Posterior vena cava (tissue), 2 donors: ENCODE measurements at regions of chr6 and their contacts with region 1.

Region 1: DNA sequence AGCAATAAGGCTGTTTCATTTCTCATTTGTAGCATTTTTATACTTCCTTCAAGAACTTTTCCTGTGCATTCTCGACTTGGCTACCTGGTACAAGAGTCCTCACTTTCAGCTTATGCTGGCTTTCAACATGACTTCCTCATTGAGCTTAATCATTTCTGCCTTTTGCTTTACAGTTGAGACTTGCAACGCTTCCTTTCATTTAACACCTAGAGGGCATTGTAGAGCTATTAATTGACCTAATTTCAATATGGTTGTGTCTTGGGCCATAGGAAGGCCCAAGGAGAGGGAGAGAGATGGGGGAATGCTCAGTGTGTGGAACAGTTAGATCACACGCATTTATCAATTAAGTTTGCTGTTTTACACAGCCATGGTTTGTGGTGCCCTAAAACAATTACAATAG is 37.2 kb downstream of the SLC22A2 start:
- DNase-seq: no peak

Region 2: GRCh38 chr6:160160450-160160849 is 61.0 kb before region 1 on chr6:
- intact Hi-C with region 1: no loop called
- DNase-seq: no peak

Region 3: GRCh38 chr6:160188773-160189172 is 32.6 kb before region 1 on chr6:
- intact Hi-C with region 1: no loop called
- DNase-seq: no peak

Region 4: GRCh38 chr6:160337301-160337700 is 115.9 kb after region 1 on chr6:
- intact Hi-C with region 1: loop called in 1 of 2 experiments (anchors 10 kb)
- DNase-seq: no peak

Region 5: GRCh38 chr6:161308075-161308655 is 1086.7 kb after region 1 on chr6:
- intact Hi-C with region 1: loop called in 1 of 2 experiments (anchors 5 kb)
- DNase-seq: no peak